WTC11 (cell line): ENCODE measurements at regions of chr11 and their contacts with region 1.

Region 1: DNA sequence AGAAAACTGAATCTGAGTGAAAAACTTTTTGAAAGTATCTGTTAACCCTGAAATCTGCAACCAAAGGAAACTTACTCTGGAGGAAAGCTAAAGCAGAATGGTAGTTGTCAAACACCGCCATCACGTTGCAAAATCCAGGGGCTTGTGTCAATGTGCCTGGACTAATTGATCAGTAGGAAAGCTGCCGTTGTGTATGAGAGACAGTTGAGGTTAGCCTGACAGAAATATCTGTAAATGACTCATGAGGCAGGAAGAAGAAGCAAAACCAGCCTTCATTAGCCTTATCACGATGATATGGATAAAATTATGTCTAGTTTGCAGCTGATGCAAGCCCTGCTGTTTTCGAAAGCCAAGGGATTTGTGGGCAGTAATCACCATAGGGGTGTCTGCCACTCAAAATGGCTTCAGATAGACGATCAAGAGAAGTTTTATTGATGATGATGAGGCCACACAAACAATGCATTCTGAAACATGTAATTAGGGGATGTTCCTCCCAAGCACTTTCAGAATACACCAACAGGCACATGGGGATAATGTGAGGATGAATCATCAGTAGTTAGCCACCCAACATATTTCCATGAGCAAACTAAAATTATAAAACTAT is 8.9 kb downstream of the SCGB1A1 start:
- DNase-seq: no peak
- ATAC-seq: no peak
- H3K4me3 Mint-ChIP-seq: no peak overlapping the region
- H3K27ac Mint-ChIP-seq: peak overlapping the region; percentile 2; the same call in 1 of the 2 replicates
- H3K4me1 Mint-ChIP-seq: peaks cover 8% of the 10 kb centered on the region
- H3K27me3 Mint-ChIP-seq: peaks cover 22% of the 10 kb centered on the region
- CTCF ChIP-seq: no peak

Region 2: DNA sequence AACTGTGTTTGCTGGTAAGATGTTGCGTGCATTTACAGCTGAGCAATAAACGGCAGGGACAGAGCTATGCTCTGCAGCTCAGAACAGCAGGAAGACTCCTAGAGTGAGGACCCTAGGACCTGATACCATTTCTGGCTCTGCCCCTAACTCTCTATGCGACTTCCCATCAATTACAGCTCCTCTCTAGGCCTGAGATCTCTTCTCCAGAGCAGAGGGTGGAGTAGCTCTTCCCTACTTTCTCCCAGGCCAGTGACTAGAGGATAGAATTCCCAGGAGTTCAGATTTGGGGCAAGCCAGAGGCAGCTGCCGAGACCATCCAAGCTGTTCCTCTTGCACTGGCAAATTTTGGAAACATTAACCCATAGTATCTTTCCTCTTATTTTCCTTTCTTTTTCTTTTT is 21.7 kb before region 1 on chr11:
- CTCF ChIA-PET with region 1: interaction called, 49 read pairs
- POLR2A ChIA-PET with region 1: no interaction called
- DNase-seq: no peak
- ATAC-seq: no peak
- H3K4me3 Mint-ChIP-seq: no peak overlapping the region
- H3K27ac Mint-ChIP-seq: no peak overlapping the region
- H3K4me1 Mint-ChIP-seq: peaks cover 10% of the 10 kb centered on the region; the same call in 1 of the 2 replicates
- H3K27me3 Mint-ChIP-seq: peaks cover 3% of the 10 kb centered on the region; the same call in 1 of the 2 replicates
- CTCF ChIP-seq: no peak

Region 3: GRCh38 chr11:62456623-62457022 is 28.9 kb after region 1 on chr11:
- CTCF ChIA-PET with region 1: interaction called, 33 read pairs
- POLR2A ChIA-PET with region 1: no interaction called
- DNase-seq: no peak
- ATAC-seq: peak; percentile 69
- H3K4me3 Mint-ChIP-seq: no peak overlapping the region
- H3K27ac Mint-ChIP-seq: no peak overlapping the region
- H3K4me1 Mint-ChIP-seq: peaks cover 5% of the 10 kb centered on the region; the same call in 1 of the 2 replicates
- H3K27me3 Mint-ChIP-seq: no peaks in the 10 kb centered on the region
- CTCF ChIP-seq: no peak

Region 4: GRCh38 chr11:62487738-62488551 is 60.2 kb after region 1 on chr11:
- CTCF ChIA-PET with region 1: interaction called, 17 read pairs
- POLR2A ChIA-PET with region 1: no interaction called
- DNase-seq: no peak
- ATAC-seq: no peak
- H3K4me3 Mint-ChIP-seq: no peak overlapping the region
- H3K27ac Mint-ChIP-seq: no peak overlapping the region
- H3K4me1 Mint-ChIP-seq: no peaks in the 10 kb centered on the region
- H3K27me3 Mint-ChIP-seq: no peaks in the 10 kb centered on the region; the same call in 1 of the 2 replicates
- CTCF ChIP-seq: no peak

Region 5: DNA sequence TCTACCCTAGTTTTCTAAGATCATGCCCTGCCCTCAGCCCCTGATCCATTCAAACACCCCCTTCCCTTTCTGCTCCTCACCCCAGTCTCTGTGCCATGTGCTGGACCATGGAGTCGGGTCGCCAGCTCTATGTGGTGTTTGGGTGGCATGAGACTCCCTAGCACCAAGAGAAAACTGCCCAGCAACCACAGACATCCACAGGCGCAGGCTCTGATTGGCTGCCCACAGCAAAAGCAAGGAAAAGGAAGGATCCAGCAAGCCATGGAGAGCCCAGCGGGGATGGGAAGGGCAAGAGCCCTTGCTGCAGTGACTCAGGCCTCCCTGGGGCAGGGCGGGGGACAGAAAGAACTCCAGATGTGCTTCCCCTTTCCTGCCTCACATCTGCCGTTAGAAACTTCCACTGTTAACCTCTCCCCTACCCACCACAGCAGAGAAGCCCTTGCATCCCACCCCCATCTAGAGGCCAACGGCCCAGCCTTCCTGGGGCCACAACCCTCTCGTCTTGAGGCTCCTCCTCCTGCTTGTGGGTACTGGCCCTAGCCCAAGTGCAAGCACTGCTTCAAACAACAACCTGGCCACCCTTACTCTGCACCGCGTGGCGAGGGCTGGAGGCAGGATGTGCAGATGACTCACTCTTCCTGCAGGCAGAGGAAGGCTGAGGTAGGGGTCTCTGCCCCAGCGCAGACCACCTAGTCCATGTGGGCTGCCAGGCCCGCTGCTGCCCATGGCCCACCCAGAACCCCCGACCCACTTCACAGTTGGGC is 128.6 kb after region 1 on chr11:
- CTCF ChIA-PET with region 1: interaction called, 108 read pairs
- POLR2A ChIA-PET with region 1: interaction called, 11 read pairs
- DNase-seq: peak; percentile 82
- ATAC-seq: peak; percentile 33
- H3K4me3 Mint-ChIP-seq: no peak overlapping the region; the same call in 1 of the 2 replicates
- H3K27ac Mint-ChIP-seq: peak overlapping the region; percentile 97
- H3K4me1 Mint-ChIP-seq: peaks cover 85% of the 10 kb centered on the region
- H3K27me3 Mint-ChIP-seq: no peaks in the 10 kb centered on the region; the same call in 1 of the 2 replicates
- CTCF ChIP-seq: no peak

Region 6: GRCh38 chr11:62612366-62613290 is 184.9 kb after region 1 on chr11 and contains the starts of genes EML3 and ROM1:
- CTCF ChIA-PET with region 1: interaction called, 10 read pairs
- POLR2A ChIA-PET with region 1: no interaction called
- DNase-seq: peak; percentile 97
- ATAC-seq: peak; percentile 89
- H3K4me3 Mint-ChIP-seq: peak within 1 kb of the TSS; percentile 95
- H3K27ac Mint-ChIP-seq: peak within 1 kb of the TSS; percentile 41; the same call in 1 of the 2 replicates
- H3K4me1 Mint-ChIP-seq: peaks cover 28% of the 10 kb centered on the region
- H3K27me3 Mint-ChIP-seq: peaks cover 9% of the 10 kb centered on the region; the same call in 1 of the 2 replicates
- CTCF ChIP-seq: peak; percentile 93
- total RNA-seq, gene EML3: 45.5 to 54.7 TPM (median 51.1 TPM) in 3 replicates
- total RNA-seq, gene ROM1: 0.78 to 1.6 TPM (median 0.94 TPM) in 3 replicates